ENCODE measurements at regions of chr7 and their contacts with region 1.

Region 1: GRCh38 chr7:105876091-105876963 is at the start of gene ATXN7L1:
- DNase-seq: peak; percentile 94
- ATAC-seq: peak; percentile 98
- total RNA-seq, gene ATXN7L1: 6.7 TPM

Region 2: GRCh38 chr7:105652359-105652993 is 223.9 kb before region 1 on chr7:
- intact Hi-C with region 1: loop called (anchors 10 kb)
- DNase-seq: peak; percentile 84
- ATAC-seq: peak; percentile 90

Region 3: GRCh38 chr7:105680505-105681187 is 195.7 kb before region 1 on chr7:
- intact Hi-C with region 1: loop called (anchors 10 kb)
- DNase-seq: no peak
- ATAC-seq: peak; percentile 57

Region 4: GRCh38 chr7:105896407-105896911 is 20.1 kb after region 1 on chr7:
- intact Hi-C with region 1: no loop called
- DNase-seq: no peak
- ATAC-seq: no peak

Region 5: GRCh38 chr7:106009403-106010226 is 133.3 kb after region 1 on chr7:
- intact Hi-C with region 1: loop called (anchors 5 kb)
- DNase-seq: peak; percentile 90
- ATAC-seq: peak; percentile 93